Naive thymus-derived CD4-positive, alpha-beta T cell (primary cell): ENCODE measurements at regions of chr17 and their contacts with region 1.

Region 1: GRCh38 chr17:50931144-50931908 is 65.2 kb upstream of the TOB1 start:
- DNase-seq: peak in 8 of 9 donors; percentile 47 to 73 (median 60)
- ATAC-seq: peak; percentile 69
- H3K4me3 ChIP-seq: peak overlapping the region; percentile 69
- H3K4me3 Mint-ChIP-seq: peak overlapping the region; percentile 84 to 97 (median 92)
- H3K27ac ChIP-seq: peak overlapping the region; percentile 63
- H3K27ac Mint-ChIP-seq: peak overlapping the region; percentile 77 to 100 (median 96)
- H3K4me1 ChIP-seq: peaks cover 20 to 21% of the 10 kb centered on the region in 2 donors
- H3K4me1 Mint-ChIP-seq: peaks cover 17 to 53% (median 33%) of the 10 kb centered on the region in 7 donors
- H3K27me3 ChIP-seq: no peaks in the 10 kb centered on the region
- H3K27me3 Mint-ChIP-seq: peaks cover 0 to 25% (median 0%) of the 10 kb centered on the region in 5 donors

Region 2: GRCh38 chr17:50820651-50821050 is 110.7 kb before region 1 on chr17:
- CTCF ChIA-PET with region 1: no interaction called
- POLR2A ChIA-PET with region 1: no interaction called
- intact Hi-C with region 1: no loop called
- DNase-seq: no peak
- ATAC-seq: no peak
- H3K4me3 ChIP-seq: no peak overlapping the region
- H3K4me3 Mint-ChIP-seq: no peak overlapping the region
- H3K27ac ChIP-seq: no peak overlapping the region
- H3K27ac Mint-ChIP-seq: no peak overlapping the region
- H3K4me1 ChIP-seq: no peaks in the 10 kb centered on the region
- H3K4me1 Mint-ChIP-seq: peaks cover 0 to 9% (median 2%) of the 10 kb centered on the region in 7 donors
- H3K27me3 ChIP-seq: no peaks in the 10 kb centered on the region
- H3K27me3 Mint-ChIP-seq: peaks cover 7 to 23% (median 15%) of the 10 kb centered on the region in 5 donors

Region 3: DNA sequence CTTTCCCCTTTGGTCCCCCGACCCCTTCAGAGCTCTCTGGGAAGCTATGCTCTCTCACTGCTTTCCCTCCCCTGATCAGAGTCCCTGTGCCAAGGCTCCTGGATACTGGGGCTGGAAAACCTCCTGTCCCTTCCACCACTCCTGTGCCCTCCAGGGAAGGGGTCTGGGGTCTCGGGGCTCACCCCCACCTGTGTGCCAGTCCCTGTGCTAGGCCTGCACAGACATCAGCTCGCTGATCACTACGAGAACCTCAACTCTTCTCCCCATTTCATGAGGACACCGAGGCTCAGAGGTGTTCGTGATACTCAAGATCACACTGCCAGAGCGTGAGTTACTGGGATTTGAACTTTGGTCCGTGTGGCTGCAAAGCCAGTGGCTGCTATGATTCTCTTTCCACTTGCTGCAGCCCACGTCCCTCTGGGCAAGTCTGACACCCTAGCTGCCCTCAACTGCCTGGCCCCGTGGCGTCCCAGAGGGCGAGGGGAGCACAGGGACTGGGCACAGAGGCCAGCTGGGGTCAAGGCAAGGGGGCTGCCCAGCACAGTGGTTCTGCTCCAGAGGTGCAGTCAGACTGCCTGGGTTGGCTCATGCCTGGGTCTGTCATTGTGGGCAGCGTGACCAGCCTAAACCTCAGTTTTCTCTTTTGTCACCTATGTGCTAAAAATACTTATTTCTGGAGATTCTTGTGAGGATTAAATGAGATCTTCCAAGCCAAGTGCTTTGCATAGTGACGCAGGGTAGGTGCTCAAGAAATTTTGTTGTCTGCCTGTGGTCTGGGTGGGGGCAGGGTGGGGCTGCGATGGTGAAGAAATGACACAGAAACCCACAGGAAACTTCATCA is 21.3 kb before region 1 on chr17:
- CTCF ChIA-PET with region 1: interaction called, 7 read pairs
- POLR2A ChIA-PET with region 1: interaction called, 38 read pairs
- intact Hi-C with region 1: loop called in 1 of 2 experiments (anchors 1 kb)
- DNase-seq: peak in 7 of 9 donors; percentile 67 to 87 (median 81)
- ATAC-seq: peak; percentile 92
- H3K4me3 ChIP-seq: peak overlapping the region; percentile 46
- H3K4me3 Mint-ChIP-seq: peak overlapping the region; percentile 29 to 84 (median 66)
- H3K27ac ChIP-seq: peak overlapping the region; percentile 75
- H3K27ac Mint-ChIP-seq: peak overlapping the region; percentile 87 to 99 (median 98)
- H3K4me1 ChIP-seq: peaks cover 50 to 69% of the 10 kb centered on the region in 2 donors
- H3K4me1 Mint-ChIP-seq: peaks cover 41 to 78% (median 67%) of the 10 kb centered on the region in 7 donors
- H3K27me3 ChIP-seq: no peaks in the 10 kb centered on the region
- H3K27me3 Mint-ChIP-seq: peaks cover 0 to 2% (median 0%) of the 10 kb centered on the region in 5 donors

Region 4: GRCh38 chr17:50919321-50920085 is 11.8 kb before region 1 on chr17:
- CTCF ChIA-PET with region 1: interaction called, 4 read pairs
- POLR2A ChIA-PET with region 1: interaction called, 41 read pairs
- intact Hi-C with region 1: loop called in 1 of 2 experiments (anchors 1 kb)
- DNase-seq: peak; percentile 67 to 91 (median 83)
- ATAC-seq: peak; percentile 95
- H3K4me3 ChIP-seq: no peak overlapping the region
- H3K4me3 Mint-ChIP-seq: peak overlapping the region; percentile 36 to 86 (median 75)
- H3K27ac ChIP-seq: peak overlapping the region; percentile 76
- H3K27ac Mint-ChIP-seq: peak overlapping the region; percentile 89 to 98 (median 97)
- H3K4me1 ChIP-seq: peaks cover 22 to 44% of the 10 kb centered on the region in 2 donors
- H3K4me1 Mint-ChIP-seq: peaks cover 19 to 56% (median 43%) of the 10 kb centered on the region in 7 donors
- H3K27me3 ChIP-seq: no peaks in the 10 kb centered on the region
- H3K27me3 Mint-ChIP-seq: peaks cover 0 to 9% (median 0%) of the 10 kb centered on the region in 5 donors